Prostate gland (tissue), 2 donors: ENCODE measurements at regions of chr9 and their contacts with region 1.

Region 1: DNA sequence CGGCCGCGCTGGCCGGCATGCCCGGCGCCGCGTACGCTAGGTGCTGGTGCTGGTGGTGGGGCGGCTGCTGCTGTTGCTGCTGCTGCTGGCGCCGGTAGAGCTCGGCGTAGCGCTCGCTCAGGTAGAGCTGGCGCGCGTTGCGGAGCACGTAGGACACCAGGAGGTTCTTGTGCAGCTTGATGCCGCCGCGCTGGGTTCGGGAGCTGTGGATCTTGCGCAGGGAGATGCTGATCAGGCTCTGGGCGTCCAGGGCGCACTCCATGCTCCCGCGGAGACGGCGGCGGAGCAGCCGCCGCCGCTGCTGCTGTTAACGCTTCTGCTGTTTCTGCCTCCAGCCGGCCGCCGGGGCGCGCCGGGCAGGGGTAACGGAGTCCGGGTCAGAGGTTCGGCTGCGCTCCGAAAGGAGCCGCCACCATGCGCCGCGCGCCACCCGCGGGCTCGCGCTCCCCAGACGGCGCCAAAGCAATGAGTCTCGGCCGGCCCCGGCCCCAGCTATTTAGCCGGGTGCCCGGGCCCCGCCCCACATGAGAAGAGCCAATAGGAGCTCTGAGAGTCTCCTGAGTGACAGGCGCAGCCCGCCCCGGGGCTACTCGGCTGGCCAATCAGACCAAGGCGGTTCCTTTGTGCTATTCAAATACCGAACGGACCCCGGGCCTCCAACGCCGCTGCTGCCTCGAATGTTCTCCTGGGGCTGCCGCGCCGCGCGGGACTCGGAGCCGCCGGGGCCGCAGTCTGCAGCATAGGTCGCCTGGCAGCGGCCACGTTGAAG is at the start of gene IER5L:
- DNase-seq: peak; percentile 97
- H3K4me3 ChIP-seq: peak within 1 kb of the TSS; percentile 66 to 71
- H3K27ac ChIP-seq: peak within 1 kb of the TSS; percentile 96 to 97
- H3K4me1 ChIP-seq: peaks cover 15% of the 10 kb centered on the region
- H3K27me3 ChIP-seq: no peaks in the 10 kb centered on the region
- CTCF ChIP-seq: peak in 1 of 4 experiments; percentile 33
- POLR2A ChIP-seq: peak; percentile 99
- total RNA-seq, gene IER5L: 7.2 to 30.7 TPM

Region 2: GRCh38 chr9:128972956-128973355 is 205.0 kb before region 1 on chr9:
- intact Hi-C with region 1: no loop called
- DNase-seq: no peak
- H3K4me3 ChIP-seq: no peak overlapping the region
- H3K27ac ChIP-seq: no peak overlapping the region
- H3K4me1 ChIP-seq: no peaks in the 10 kb centered on the region
- H3K27me3 ChIP-seq: no peaks in the 10 kb centered on the region
- CTCF ChIP-seq: no peak
- POLR2A ChIP-seq: no peak

Region 3: GRCh38 chr9:129139993-129140396 is 38.0 kb before region 1 on chr9:
- intact Hi-C with region 1: loop called (anchors 2 kb)
- DNase-seq: peak; percentile 94
- H3K4me3 ChIP-seq: peak overlapping the region; percentile 30 to 39
- H3K27ac ChIP-seq: peak overlapping the region; percentile 99
- H3K4me1 ChIP-seq: peaks cover 36% of the 10 kb centered on the region
- H3K27me3 ChIP-seq: no peaks in the 10 kb centered on the region
- CTCF ChIP-seq: peak in 2 of 4 experiments; percentile 20 to 27
- POLR2A ChIP-seq: peak; percentile 85

Region 4: GRCh38 chr9:129225815-129226214 is 47.8 kb after region 1 on chr9:
- intact Hi-C with region 1: no loop called
- DNase-seq: no peak
- H3K4me3 ChIP-seq: no peak overlapping the region
- H3K27ac ChIP-seq: no peak overlapping the region
- H3K4me1 ChIP-seq: no peaks in the 10 kb centered on the region
- H3K27me3 ChIP-seq: no peaks in the 10 kb centered on the region
- CTCF ChIP-seq: no peak
- POLR2A ChIP-seq: no peak

Region 5: DNA sequence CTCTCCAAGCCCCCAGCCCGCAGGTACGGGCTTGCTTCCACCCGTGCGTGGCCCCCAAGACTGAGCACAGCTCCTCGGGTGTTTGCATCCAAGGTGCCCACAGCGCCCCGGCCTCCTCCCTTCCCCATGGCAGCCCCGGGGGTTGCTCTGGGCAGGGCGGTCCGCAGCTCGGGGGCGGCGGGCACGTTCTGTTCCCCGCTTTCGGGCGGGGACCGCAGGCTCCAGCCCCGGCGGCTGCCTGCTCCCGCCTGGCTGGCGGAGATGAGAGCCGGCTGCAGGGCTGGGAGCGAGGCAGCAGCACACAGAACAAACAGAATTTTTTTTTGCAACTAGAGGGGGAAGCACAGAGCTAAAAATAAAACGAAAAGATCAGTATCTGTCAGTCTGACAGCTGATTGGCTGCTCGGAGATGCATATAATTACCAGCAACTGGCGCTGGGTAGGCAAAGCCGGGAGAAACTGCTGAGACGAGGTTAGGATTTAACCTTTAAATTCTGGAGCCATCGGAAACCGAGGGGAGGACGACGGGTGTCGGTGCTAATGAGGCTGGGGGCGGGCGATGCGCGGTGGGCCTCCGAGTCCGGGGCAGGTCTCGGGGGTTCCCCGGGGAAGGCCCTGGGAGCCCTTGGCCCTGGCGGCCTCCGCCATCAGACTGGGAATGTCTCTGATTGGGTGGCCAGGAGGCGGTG is 142.7 kb after region 1 on chr9:
- intact Hi-C with region 1: loop called (anchors 5 kb)
- DNase-seq: peak; percentile 86
- H3K4me3 ChIP-seq: peak overlapping the region; percentile 29 to 44
- H3K27ac ChIP-seq: peak overlapping the region; percentile 85 to 89
- H3K4me1 ChIP-seq: peaks cover 8% of the 10 kb centered on the region
- H3K27me3 ChIP-seq: no peaks in the 10 kb centered on the region
- CTCF ChIP-seq: peak in 2 of 4 experiments; percentile 38 to 59
- POLR2A ChIP-seq: peak; percentile 82

Region 6: GRCh38 chr9:129413537-129414376 is 235.8 kb after region 1 on chr9:
- intact Hi-C with region 1: loop called (anchors 1 kb)
- DNase-seq: peak; percentile 99
- H3K4me3 ChIP-seq: peak overlapping the region; percentile 55 to 58
- H3K27ac ChIP-seq: peak overlapping the region; percentile 99
- H3K4me1 ChIP-seq: peaks cover 13% of the 10 kb centered on the region
- H3K27me3 ChIP-seq: no peaks in the 10 kb centered on the region
- CTCF ChIP-seq: peak in 2 of 4 experiments; percentile 18 to 23
- POLR2A ChIP-seq: peak; percentile 94

Region 7: DNA sequence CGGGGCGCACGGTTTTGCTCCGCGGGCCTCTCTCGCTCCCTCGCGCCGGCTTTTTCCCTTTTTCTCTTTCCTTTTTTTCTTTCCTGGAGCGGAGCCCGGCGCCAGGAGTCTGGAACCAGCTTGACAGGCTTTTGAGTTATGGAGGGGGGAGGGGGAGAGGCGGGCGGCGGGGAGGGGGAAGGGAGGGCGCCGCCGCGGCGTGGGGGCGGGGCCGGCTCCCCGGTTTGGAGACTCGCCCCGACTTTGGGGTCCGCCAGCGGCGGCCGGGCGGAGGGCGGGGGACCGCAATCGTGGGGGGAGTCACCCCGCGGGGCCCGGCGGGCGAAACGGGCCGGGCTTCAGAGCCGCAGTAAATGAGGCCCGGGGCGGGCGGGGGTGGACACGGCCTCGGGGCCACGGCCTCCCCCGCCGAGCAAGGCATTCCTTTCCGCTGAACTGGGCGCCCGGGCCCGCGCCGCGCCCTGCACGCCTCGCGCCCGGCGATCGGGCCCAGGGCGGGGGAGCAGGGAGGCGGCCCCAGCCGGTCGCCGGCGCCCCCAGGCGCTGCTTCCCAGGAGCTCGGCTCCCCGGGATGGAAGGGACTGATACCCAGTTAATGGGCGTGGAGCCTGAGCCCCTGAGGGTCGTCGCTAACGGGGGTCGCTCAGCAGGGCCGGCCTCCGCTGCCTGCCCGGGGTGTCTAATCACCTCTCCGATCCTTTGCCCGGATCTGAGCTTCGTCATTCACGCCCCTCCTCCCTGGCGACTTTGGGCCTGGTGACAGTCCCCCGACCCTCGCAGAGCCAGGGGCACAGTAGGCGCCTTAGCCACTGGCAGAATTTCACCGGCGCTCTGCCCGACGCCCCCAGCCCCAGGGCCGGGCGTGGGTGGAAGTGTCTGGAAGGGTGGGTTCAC is 304.8 kb after region 1 on chr9:
- intact Hi-C with region 1: loop called (anchors 1 kb)
- DNase-seq: peak; percentile 88
- H3K4me3 ChIP-seq: peak overlapping the region; percentile 51 to 53
- H3K27ac ChIP-seq: peak overlapping the region; percentile 99 to 100
- H3K4me1 ChIP-seq: peaks cover 36% of the 10 kb centered on the region
- H3K27me3 ChIP-seq: no peaks in the 10 kb centered on the region
- CTCF ChIP-seq: peak in 1 of 4 experiments; percentile 22
- POLR2A ChIP-seq: peak; percentile 19

Region 8: GRCh38 chr9:129495534-129496325 is 317.8 kb after region 1 on chr9:
- intact Hi-C with region 1: loop called (anchors 5 kb)
- DNase-seq: peak; percentile 93
- H3K4me3 ChIP-seq: peak overlapping the region; percentile 29 to 55
- H3K27ac ChIP-seq: peak overlapping the region; percentile 99 to 100
- H3K4me1 ChIP-seq: peaks cover 38% of the 10 kb centered on the region
- H3K27me3 ChIP-seq: no peaks in the 10 kb centered on the region
- CTCF ChIP-seq: peak in 1 of 4 experiments; percentile 26
- POLR2A ChIP-seq: no peak

Region 9: DNA sequence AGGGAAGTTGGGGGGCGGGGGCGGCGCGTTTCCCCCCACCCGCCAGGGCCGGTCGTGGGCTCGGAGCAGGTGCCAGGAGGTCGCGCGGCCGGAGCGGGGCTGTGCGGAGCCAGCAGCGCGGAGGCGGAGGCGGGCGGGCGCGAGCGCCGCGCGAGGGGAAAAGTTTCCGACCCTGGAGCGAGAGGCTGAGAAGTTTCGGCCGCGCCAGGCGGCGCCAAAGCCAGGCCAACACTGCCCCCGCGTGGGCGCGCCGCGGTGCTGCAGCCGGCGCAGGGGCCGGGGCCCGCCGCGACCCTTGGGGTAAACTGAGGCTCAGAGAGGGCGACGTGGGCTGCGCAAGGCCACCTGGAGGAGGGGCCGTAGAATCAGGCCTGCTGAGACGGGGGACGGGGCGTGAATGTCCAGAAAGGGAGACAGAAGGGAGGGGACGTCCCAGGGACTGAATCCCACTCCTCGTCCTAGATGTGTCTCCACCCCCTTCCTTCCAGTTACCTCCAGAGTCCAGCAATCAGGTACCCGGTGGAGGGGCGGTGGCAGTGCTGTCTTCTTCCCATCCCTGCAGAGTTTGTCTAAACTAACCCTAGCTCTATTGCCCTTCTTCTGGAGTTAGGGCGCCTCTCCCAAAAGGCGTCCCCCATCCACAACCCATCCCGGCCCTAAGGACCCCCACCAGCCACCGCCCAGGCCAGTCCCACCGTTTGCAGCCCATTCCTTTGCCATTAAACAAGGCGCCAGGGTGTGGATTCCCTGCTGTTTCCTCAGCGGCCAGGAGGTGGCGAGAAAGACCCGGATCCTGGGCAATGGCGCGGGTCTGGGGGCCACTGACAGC is 432.7 kb after region 1 on chr9:
- intact Hi-C with region 1: loop called (anchors 1 kb)
- DNase-seq: peak; percentile 62
- H3K4me3 ChIP-seq: peak overlapping the region; percentile 64 to 69
- H3K27ac ChIP-seq: peak overlapping the region; percentile 89 to 94
- H3K4me1 ChIP-seq: peaks cover 6% of the 10 kb centered on the region
- H3K27me3 ChIP-seq: no peaks in the 10 kb centered on the region
- CTCF ChIP-seq: peak; percentile 93 to 100 (median 98)
- POLR2A ChIP-seq: peak; percentile 20